OCI-LY7 (cell line): ENCODE measurements at regions of chr10 and their contacts with region 1.

Region 1: DNA sequence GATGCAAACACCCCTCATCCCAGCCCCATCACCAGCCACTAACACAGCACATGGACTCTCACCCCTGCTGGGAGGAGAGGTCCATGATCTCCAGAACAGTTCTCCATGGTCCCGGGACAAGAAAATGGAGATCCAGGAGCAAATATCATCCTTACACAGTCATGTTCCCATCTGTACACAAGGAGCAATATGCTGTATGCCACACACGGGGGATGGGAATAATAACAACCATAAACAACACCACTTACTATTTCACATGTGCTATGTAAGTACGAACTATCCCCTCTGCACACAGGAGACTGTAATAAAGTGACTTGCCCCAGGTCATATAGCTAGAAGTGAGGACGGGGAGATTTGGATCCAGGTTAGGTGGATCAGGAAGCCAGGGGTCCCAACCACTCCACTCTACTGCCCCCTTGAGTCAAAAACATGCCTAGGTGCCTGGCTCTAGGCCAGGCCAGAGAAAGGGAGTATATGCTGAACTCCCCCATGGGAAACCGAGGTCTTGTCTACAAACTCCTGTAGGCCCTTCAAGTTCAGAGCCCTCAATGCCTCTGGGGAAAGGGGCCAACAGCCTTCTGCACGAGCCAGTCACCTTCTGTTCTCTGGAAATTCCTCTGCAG is 34.1 kb downstream of the LRRC20 start:
- DNase-seq: peak; percentile 77
- H3K4me3 ChIP-seq: no peak overlapping the region
- H3K27ac ChIP-seq: no peak overlapping the region
- H3K4me1 ChIP-seq: peaks cover 20% of the 10 kb centered on the region
- CTCF ChIP-seq: peak; percentile 97

Region 2: GRCh38 chr10:70265032-70265689 is 83.2 kb before region 1 on chr10:
- CTCF ChIA-PET with region 1: interaction called, 7 read pairs
- POLR2A ChIA-PET with region 1: interaction called, 6 read pairs
- intact Hi-C with region 1: loop called (anchors 1 kb)
- DNase-seq: peak; percentile 78
- H3K4me3 ChIP-seq: no peak overlapping the region
- H3K27ac ChIP-seq: no peak overlapping the region
- H3K4me1 ChIP-seq: peaks cover 7% of the 10 kb centered on the region
- CTCF ChIP-seq: peak; percentile 90